Common myeloid progenitor, CD34-positive (primary cell): ENCODE measurements at regions of chr9 and their contacts with region 1.

Region 1: DNA sequence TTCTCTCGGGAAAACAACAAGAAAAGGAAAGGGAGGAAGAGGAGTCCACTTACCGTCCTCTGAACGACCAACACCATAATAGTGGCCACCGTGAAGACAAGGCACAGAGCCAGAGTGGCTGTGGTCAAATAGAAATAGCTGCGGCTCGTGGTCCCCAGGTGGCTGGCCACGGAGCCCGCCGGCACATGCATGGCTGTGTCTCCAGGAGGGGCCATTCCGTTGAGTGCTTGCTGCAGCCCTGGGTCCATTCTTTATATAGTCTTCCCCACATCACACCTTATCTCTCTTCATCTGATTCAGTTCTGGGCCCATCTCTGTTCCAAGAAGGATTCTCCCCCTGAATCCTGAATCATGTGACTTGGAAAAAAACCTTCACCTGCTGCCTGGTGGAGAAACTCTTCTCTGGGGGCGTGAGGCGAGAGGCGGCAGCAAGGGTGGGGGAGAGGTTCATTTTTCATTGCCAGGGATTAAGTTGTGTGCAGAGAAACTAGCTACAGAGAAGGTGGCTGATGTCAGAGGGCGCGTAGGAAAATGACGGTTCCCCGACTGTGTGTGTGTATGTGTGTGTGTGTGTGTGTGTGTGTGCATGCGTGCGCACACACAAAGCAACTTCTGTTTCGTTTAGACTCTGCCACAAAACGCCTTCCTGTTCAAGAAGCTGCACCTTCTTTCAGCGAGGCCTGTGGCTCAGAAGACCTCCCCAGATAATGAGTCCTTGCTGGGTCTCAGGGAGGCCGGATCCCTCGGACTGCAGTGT is at the start of gene TNFSF8:
- DNase-seq: peak; percentile 79 to 96 (median 95)
- H3K4me3 ChIP-seq: peak within 1 kb of the TSS; percentile 29 to 84 (median 69)
- H3K27ac ChIP-seq: peak within 1 kb of the TSS; percentile 47 to 72
- H3K4me1 ChIP-seq: peaks cover 25 to 45% (median 37%) of the 10 kb centered on the region in 4 experiments
- H3K27me3 ChIP-seq: no peaks in the 10 kb centered on the region

Region 2: GRCh38 chr9:114919611-114920010 is 10.6 kb before region 1 on chr9:
- CTCF ChIA-PET with region 1: interaction called, 11 read pairs
- POLR2A ChIA-PET with region 1: interaction called, 4 read pairs
- DNase-seq: no peak
- H3K4me3 ChIP-seq: no peak overlapping the region
- H3K27ac ChIP-seq: no peak overlapping the region
- H3K4me1 ChIP-seq: peaks cover under 1 to 27% (median 10%) of the 10 kb centered on the region in 4 experiments
- H3K27me3 ChIP-seq: no peaks in the 10 kb centered on the region

Region 3: DNA sequence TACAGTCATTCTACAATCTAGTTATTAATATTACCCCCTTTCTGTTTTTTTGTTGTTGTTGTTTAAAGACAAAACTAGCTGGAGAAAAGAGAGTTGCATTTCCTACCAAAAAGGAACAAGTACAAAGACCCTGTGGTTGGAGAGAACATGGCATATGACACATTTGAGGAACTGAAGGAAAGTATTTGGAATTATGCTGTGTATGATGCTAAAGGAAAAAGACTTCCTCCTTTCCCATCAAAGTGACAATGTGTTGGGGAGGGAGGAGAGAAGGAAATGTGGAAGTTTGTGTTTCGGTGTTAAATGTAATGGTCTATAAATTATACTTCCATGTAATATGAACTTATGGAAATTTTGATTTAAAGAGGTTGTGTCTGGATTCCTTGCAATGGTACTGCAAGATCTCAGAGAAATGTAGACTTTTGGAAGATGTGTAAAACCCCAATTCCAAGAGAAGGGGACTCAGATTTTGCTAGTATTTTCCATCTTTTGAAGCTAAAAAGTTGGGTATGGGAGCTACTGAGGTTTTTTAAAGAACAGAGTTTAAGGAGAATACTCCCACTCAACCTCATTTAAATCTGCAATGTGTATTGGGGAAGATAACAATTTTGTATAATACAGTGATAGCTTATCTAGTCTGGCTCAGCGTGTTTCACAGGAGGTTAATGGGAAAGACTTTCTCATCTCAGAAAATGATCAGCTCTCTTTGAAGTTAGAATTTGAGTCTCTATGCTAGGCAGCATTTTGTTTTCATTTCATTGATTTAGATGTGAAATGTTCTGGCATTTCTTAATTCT is 15.6 kb after region 1 on chr9:
- CTCF ChIA-PET with region 1: interaction called, 10 read pairs
- POLR2A ChIA-PET with region 1: interaction called, 5 read pairs
- DNase-seq: peak in 1 of 3 donors; percentile 43
- H3K4me3 ChIP-seq: no peak overlapping the region
- H3K27ac ChIP-seq: no peak overlapping the region
- H3K4me1 ChIP-seq: peaks cover 15 to 38% (median 28%) of the 10 kb centered on the region in 4 experiments
- H3K27me3 ChIP-seq: no peaks in the 10 kb centered on the region